ENCODE measurements at regions of chr20 and their contacts with region 1.

Region 1: GRCh38 chr20:43187476-43188233 is 2.1 kb downstream of the PTPRT start:
- DNase-seq: peak; percentile 79
- H3K4me3 Mint-ChIP-seq: no peak overlapping the region
- H3K27ac Mint-ChIP-seq: no peak overlapping the region
- H3K4me1 Mint-ChIP-seq: peaks cover 8% of the 10 kb centered on the region
- H3K27me3 Mint-ChIP-seq: peaks cover 43% of the 10 kb centered on the region

Region 2: DNA sequence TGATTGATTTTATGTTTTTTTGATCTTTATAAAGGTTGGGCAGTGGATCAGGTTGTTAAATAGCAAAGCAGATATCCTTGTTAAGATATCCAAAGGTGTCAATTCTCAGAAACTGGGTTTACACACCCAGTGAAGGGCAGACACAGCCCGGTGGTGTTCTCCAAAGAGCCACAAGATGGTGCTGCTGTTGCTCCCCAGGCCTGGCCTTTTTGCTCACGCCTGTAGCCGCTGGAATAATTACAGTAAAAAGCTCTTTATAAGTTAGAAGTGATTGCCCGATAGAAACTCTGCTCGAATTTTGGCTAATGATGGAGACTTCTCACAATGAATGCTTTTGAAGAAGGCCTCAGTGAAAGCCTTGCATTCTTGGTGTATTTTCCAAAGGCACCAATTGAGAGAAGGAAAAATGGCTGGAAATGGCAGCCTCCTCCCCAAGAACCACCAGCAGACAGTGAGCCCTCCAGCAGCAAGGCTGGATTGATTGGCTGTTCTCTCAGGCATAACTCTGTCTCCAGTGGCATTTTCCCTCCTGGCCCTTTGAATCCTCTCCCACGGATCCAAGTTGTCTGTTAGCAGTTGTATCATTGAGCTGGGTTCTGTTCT is 1449.0 kb before region 1 on chr20:
- CTCF ChIA-PET with region 1: interaction called, 3 read pairs
- POLR2A ChIA-PET with region 1: no interaction called
- intact Hi-C with region 1: loop called (anchors 1 kb)
- DNase-seq: peak; percentile 64
- H3K4me3 Mint-ChIP-seq: no peak overlapping the region
- H3K27ac Mint-ChIP-seq: no peak overlapping the region
- H3K4me1 Mint-ChIP-seq: no peaks in the 10 kb centered on the region
- H3K27me3 Mint-ChIP-seq: no peaks in the 10 kb centered on the region

Region 3: DNA sequence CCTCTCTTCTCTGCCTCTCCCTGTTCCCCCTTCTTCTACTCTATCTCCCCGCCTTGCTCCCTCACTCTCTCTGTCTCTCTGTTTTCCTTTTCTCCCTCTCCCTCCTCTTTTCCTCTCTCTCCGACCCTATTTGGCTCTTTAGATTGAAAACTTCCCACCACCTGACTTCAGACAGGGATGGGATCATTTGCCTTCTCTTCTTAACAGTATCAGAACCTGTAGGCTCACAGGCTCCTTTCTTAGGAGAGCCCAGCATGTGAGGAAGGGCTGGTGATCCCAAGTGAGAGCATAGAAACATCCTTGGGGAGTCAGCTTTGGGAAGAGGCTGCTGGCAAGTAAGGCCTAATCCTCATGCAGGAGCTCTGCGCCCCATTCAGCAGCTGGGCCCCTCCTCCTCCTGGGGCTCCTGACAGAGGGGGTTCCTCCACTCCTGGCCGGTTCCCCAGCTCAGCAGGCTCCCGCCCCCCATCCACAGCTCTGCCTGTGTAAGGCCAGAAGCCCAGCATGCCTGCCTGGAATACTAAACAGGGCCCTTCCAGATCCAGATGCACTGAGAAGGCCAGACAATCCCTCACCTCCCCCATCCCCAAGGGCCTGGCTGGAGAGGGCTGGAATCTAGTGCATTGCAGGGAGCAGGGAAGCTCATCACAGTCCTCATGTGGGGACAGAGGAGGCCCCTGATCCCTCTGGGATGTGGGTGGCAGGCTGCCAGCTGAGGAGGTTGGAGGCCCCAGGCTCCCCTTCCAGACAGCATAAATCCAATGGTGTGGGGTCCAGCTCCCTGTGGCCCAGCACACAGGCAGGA is 91.3 kb before region 1 on chr20:
- CTCF ChIA-PET with region 1: no interaction called
- POLR2A ChIA-PET with region 1: no interaction called
- intact Hi-C with region 1: no loop called
- DNase-seq: no peak
- H3K4me3 Mint-ChIP-seq: no peak overlapping the region
- H3K27ac Mint-ChIP-seq: no peak overlapping the region
- H3K4me1 Mint-ChIP-seq: no peaks in the 10 kb centered on the region
- H3K27me3 Mint-ChIP-seq: no peaks in the 10 kb centered on the region

Region 4: DNA sequence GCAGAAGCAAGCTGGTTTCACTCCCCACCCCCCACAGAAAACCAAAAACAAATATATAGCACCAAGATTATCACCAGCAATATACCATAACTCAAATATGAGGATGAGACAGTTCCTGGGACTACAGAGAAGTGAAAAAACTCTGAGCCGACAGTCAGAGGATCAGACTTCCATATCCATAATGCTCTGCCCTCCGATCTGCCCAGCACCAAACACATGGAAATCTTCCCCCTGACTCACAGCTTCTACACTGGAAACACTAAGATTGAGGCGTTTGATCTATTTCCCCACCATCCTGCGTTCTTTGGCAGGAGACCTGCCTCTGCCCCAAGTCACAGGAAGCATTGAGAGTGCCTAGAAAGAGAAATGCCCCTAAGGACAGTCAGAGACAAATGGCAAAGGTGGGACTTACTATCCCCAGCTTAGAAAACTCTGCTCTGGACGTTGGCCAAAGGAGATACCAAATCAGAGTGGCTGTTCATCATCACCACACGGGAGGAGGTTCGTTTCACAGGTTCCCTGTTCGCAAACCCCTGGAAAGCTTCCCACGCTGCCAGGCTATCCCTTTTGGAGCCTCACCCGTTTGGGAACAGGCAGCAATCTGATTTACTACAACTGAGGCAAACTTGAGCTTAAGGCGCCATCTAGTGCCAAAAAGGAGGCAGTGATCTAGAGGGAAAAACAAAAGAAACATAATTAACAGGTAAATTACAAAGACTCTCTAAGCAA is 221.4 kb after region 1 on chr20:
- CTCF ChIA-PET with region 1: no interaction called
- POLR2A ChIA-PET with region 1: no interaction called
- intact Hi-C with region 1: loop called (anchors 2 kb)
- DNase-seq: peak; percentile 12
- H3K4me3 Mint-ChIP-seq: no peak overlapping the region
- H3K27ac Mint-ChIP-seq: no peak overlapping the region
- H3K4me1 Mint-ChIP-seq: no peaks in the 10 kb centered on the region
- H3K27me3 Mint-ChIP-seq: peaks cover 56% of the 10 kb centered on the region